WTC11 (cell line): ENCODE measurements at regions of chr17 and their contacts with region 1.

Region 1: GRCh38 chr17:73478768-73479424 is 165.3 kb downstream of the SDK2 start:
- DNase-seq: peak; percentile 58
- ATAC-seq: peak; percentile 75
- H3K4me3 Mint-ChIP-seq: no peak overlapping the region
- H3K27ac Mint-ChIP-seq: peak overlapping the region; percentile 52
- H3K4me1 Mint-ChIP-seq: peaks cover 31% of the 10 kb centered on the region
- H3K27me3 Mint-ChIP-seq: peaks cover 2% of the 10 kb centered on the region; the same call in 1 of the 2 replicates
- CTCF ChIP-seq: peak; percentile 29; the same call in 1 of the 2 replicates

Region 2: DNA sequence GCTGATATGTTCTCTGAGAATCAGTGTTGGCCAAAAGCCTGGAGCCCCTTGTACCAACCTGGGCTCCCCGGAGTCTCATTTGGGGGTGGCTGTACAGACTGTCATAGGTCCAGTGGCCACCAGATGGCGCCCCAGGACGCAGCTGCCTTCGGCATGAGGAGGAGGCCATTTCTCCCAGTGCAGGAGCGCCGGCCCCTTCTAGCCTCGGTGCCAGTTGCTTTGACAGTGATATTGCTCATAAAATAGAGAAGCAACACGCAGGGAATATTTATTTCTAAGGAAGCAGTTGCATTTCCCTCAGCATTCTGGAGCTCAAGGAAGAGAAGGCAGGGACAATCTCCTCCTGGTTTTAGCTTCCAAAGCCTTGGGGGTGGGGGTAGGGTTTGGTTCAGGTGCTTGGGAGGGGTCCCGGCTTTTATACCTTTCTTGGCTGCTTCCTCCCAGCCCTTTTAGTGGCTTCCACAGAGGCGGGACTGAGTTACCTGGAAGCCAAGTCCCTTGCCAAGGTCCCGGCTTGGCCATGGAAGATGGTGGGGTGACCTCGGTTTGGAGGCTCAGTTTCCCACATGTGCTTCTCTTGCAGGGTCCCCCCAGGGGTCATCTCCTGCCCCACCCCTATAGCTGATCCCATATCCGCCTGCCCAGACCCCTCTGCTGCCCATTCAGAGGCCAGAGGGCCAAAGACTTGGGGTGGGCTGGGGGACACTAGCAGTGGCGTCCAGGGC is 49.3 kb before region 1 on chr17:
- CTCF ChIA-PET with region 1: interaction called, 15 read pairs
- POLR2A ChIA-PET with region 1: no interaction called
- DNase-seq: peak; percentile 93
- ATAC-seq: peak; percentile 97
- H3K4me3 Mint-ChIP-seq: no peak overlapping the region
- H3K27ac Mint-ChIP-seq: no peak overlapping the region
- H3K4me1 Mint-ChIP-seq: peaks cover 19% of the 10 kb centered on the region
- H3K27me3 Mint-ChIP-seq: no peaks in the 10 kb centered on the region
- CTCF ChIP-seq: peak; percentile 95

Region 3: DNA sequence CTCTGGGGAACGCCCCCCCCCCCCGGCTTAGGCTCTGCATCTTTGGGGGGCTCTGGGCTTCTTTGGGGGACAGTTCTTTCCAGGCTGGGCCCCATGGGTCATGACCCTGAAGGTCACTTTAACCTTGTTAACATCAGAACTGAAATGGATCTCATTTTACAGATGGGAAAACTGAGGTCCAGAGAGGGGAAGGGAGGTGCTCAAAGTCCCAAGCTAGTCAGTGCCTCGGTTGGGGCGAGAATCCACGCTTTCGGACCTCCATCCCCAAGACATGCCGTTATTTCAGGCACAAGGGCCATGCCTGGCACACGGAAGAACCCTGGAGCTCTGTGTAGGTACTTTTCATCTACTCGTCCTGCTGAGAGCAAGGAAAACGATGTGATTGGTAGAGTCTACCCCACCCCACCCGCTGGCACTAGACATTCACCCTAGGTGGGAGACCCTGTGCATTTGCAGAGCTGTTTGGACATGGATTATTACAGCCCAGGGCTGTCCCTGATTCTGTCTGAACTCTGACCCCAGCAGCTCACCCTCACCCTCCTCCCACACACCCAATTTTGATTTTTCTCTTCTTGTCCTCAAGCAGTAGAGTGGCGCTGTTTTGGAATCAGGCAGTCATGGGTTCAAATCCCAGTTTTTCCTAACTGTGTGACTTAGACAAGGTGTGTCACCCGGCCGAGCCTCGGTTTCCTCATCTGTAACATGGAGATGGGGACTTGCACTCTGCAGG is 12.0 kb before region 1 on chr17:
- CTCF ChIA-PET with region 1: interaction called, 19 read pairs
- POLR2A ChIA-PET with region 1: no interaction called
- DNase-seq: no peak
- ATAC-seq: no peak; the same call in 1 of the 2 replicates
- H3K4me3 Mint-ChIP-seq: no peak overlapping the region
- H3K27ac Mint-ChIP-seq: no peak overlapping the region
- H3K4me1 Mint-ChIP-seq: peaks cover 12% of the 10 kb centered on the region
- H3K27me3 Mint-ChIP-seq: no peaks in the 10 kb centered on the region
- CTCF ChIP-seq: no peak

Region 4: DNA sequence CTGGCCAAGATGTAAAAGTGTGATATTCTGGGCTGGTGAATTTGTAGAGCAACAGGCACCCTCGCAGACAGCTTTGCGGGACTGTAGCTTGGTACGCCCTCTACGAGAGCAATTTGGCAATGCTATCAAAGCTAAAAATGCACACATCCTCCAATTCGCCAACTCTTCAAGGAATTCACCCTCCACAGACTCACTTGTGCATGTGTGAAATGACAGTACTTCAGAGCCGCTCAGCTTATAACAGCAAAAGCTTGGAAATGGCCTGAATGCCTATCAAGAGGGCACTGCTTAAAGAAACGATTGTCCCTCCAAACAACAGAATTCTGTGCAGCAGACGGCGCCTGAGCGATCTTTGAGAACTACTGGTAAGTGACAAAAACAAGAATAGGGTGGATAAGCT is 34.5 kb after region 1 on chr17:
- CTCF ChIA-PET with region 1: interaction called, 10 read pairs
- POLR2A ChIA-PET with region 1: no interaction called
- DNase-seq: no peak
- ATAC-seq: no peak
- H3K4me3 Mint-ChIP-seq: no peak overlapping the region
- H3K27ac Mint-ChIP-seq: no peak overlapping the region
- H3K4me1 Mint-ChIP-seq: peaks cover 24% of the 10 kb centered on the region
- H3K27me3 Mint-ChIP-seq: no peaks in the 10 kb centered on the region
- CTCF ChIP-seq: no peak

Region 5: GRCh38 chr17:73586921-73587602 is 108.2 kb after region 1 on chr17:
- CTCF ChIA-PET with region 1: interaction called, 12 read pairs
- POLR2A ChIA-PET with region 1: no interaction called
- DNase-seq: no peak
- ATAC-seq: no peak
- H3K4me3 Mint-ChIP-seq: no peak overlapping the region
- H3K27ac Mint-ChIP-seq: no peak overlapping the region
- H3K4me1 Mint-ChIP-seq: peaks cover 51% of the 10 kb centered on the region
- H3K27me3 Mint-ChIP-seq: no peaks in the 10 kb centered on the region
- CTCF ChIP-seq: no peak

Region 6: DNA sequence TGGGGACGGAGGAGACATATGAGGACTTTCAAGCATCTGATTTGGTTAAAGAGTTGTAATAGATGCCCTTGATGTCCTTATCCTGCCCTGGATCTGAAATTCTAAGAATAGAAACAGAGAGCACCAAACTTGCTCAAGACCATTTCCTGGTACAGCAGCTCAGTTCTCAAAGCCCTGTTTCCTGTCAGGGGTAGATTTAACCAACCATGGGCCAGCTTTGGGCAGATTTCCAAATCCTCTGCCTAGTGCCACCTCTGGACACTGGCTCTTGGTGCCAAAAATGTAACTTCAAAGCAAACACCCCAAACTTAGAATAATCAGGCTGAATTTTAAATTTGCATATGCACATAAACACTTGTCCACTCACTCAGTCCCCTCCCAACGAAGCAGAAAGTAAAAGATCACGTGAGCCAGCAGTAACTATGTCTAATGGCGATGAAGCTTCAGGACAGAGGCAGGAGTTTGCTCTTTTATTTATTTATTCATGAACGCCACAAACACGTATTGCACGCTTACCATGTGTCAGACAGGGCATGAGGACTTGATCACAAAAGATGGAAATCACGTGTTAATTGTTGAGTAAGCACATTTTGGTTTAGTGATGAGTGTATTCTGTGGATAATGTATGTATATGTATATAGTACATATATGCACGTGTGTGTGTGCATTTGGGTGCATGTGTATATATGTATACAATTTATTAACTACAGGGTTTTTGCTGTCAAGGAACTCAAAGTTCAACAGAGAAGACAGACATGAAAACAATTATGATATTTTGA is 188.5 kb after region 1 on chr17:
- CTCF ChIA-PET with region 1: no interaction called
- POLR2A ChIA-PET with region 1: no interaction called
- DNase-seq: no peak
- ATAC-seq: no peak
- H3K4me3 Mint-ChIP-seq: no peak overlapping the region
- H3K27ac Mint-ChIP-seq: no peak overlapping the region
- H3K4me1 Mint-ChIP-seq: peaks cover 17% of the 10 kb centered on the region
- H3K27me3 Mint-ChIP-seq: no peaks in the 10 kb centered on the region; the same call in 1 of the 2 replicates
- CTCF ChIP-seq: no peak